CD4-positive, alpha-beta T cell (primary cell): ENCODE measurements at regions of chr17 and their contacts with region 1.

Region 1: DNA sequence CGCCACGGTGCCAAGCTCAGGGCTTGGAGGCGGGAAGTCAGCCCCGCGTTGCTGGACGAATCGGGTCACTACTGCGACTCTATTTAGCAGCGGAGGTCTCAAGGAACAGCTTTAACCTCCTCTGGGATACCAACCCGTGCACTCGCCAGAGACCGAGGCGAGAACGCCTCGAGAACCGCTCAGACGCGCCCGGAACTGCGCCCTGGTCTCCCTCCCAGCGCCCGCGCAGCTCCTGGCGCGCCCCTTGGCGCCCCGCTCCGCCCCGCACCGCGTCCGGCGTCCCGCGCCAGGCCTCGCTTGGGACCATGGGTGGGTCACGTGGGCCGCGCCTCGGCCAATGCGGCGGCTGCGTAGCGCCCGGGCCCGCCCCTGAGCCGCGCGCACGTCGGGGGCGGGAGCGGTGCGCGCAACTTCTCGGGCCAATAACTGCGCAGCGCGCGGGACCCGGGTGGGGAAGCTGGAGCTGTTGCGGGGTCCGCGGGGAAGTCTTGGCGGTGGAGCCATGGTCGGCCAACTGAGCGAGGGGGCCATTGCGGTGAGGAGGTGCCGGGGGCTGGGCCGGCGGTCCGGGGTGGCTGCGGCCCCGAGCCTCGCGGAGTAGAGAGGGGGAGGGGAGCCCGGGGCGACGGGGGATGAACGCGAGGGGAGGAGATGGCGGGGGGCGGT is at the starts of genes RPA1 and SMYD4:
- DNase-seq: peak; percentile 71 to 95 (median 84)
- ATAC-seq: peak; percentile 98
- H3K4me3 ChIP-seq: peak within 1 kb of the TSS; percentile 87
- H3K4me3 Mint-ChIP-seq: peak within 1 kb of the TSS; percentile 99
- H3K27ac ChIP-seq: peak within 1 kb of the TSS; percentile 61 to 81
- H3K27ac Mint-ChIP-seq: peak within 1 kb of the TSS; percentile 90
- H3K4me1 ChIP-seq: peaks cover 51% of the 10 kb centered on the region
- H3K4me1 Mint-ChIP-seq: peaks cover 66% of the 10 kb centered on the region
- H3K27me3 ChIP-seq: no peaks in the 10 kb centered on the region
- H3K27me3 Mint-ChIP-seq: no peaks in the 10 kb centered on the region
- CTCF ChIP-seq: no peak
- total RNA-seq, gene RPA1: 38.6 to 38.7 TPM
- total RNA-seq, gene SMYD4: 9.3 to 10.6 TPM

Region 2: DNA sequence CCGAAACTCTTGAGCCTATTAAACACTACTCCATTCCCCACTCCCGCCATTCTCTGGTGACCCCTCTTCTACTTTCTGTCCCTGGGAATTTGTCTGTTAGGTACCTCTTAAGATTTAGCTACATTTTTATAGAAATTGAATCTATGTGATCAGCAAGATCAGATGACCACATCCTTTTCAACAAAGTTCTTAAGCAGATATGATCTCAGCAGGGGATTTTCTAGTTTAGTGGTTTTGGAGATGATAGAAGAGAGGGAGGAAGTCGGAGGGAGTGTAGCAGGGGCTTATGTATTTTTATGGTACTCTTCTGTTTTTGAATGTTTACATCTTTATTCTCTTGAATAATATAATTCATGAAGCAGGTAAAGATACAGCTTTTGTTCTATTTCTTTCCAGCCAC is 40.9 kb after region 1 on chr17:
- CTCF ChIA-PET with region 1: interaction called, 7 read pairs
- POLR2A ChIA-PET with region 1: interaction called, 16 read pairs
- intact Hi-C with region 1: loop called in 1 of 2 experiments (anchors 5 kb)
- DNase-seq: peak in 3 of 14 experiments; percentile 82 to 84 (median 83)
- ATAC-seq: peak; percentile 65
- H3K4me3 ChIP-seq: no peak overlapping the region
- H3K4me3 Mint-ChIP-seq: peak overlapping the region; percentile 32
- H3K27ac ChIP-seq: peak overlapping the region; percentile 58 to 70
- H3K27ac Mint-ChIP-seq: peak overlapping the region; percentile 84
- H3K4me1 ChIP-seq: peaks cover 48% of the 10 kb centered on the region
- H3K4me1 Mint-ChIP-seq: peaks cover 50% of the 10 kb centered on the region
- H3K27me3 ChIP-seq: no peaks in the 10 kb centered on the region
- H3K27me3 Mint-ChIP-seq: no peaks in the 10 kb centered on the region
- CTCF ChIP-seq: no peak